CD14-positive monocyte (primary cell): ENCODE measurements at regions of chr2 and their contacts with region 1.

Region 1: GRCh38 chr2:69581774-69582581 is 61.6 kb downstream of the AAK1 start:
- DNase-seq: peak; percentile 42 to 58 (median 56)
- H3K4me3 ChIP-seq: peak overlapping the region; percentile 8 to 68 (median 25)
- H3K4me3 Mint-ChIP-seq: peak overlapping the region; percentile 75 to 93
- H3K27ac ChIP-seq: peak overlapping the region; percentile 71 to 86
- H3K27ac Mint-ChIP-seq: peak overlapping the region; percentile 88 to 97 (median 93)
- H3K4me1 ChIP-seq: peaks cover 75 to 78% of the 10 kb centered on the region in 2 donors
- H3K4me1 Mint-ChIP-seq: peaks cover 81% of the 10 kb centered on the region
- H3K27me3 ChIP-seq: no peaks in the 10 kb centered on the region
- H3K27me3 Mint-ChIP-seq: peaks cover 0 to 2% (median 0%) of the 10 kb centered on the region in 3 donors
- CTCF ChIP-seq: no peak

Region 2: DNA sequence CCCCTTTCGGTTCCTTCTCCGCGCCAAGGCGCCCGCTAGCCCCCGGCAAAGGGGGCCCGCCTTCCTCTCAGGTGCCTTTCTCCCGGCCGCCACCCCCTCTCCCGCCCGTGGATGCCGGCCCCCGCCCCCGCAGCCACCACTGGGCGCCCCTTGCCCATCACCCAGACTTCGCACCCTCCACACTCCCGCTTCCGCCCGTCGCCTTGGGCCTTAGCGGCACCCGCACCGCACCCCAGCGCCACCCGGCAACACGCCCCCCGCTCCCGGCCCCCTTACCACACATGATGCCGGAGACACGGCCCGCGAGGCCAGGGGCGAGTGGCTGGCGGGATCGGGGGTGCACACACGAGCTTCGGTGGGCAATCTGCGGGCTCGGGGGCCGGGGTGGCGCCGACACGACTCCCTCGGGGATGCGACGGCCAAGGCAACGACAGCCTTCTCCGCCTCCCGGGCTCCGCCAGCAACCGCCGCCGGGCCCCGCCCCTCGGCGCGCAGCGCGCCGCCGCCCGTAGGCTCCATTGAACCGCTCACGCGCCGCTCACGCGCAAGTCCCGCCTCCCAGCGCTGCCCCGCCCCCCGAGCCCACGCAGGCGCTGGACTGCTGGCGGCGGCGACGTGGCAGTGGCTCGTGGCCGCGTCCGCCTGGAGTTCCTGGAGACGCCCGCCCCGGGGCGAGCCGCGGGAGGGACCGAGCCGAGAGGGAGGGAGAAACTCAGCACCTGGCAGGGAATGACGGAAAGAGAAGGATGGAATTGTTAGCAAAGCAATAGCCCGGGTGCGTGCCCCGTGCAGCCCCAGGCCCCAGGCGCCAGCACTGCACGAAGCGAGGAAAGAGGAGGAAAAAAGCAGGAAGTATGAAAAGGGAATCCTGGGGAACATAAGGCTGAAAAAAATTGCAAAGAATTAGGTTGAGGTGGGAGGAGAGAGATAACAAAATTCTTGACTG is 194.9 kb before region 1 on chr2 and contains the start of gene GFPT1:
- intact Hi-C with region 1: no loop called
- DNase-seq: peak; percentile 88 to 89 (median 89)
- H3K4me3 ChIP-seq: peak within 1 kb of the TSS; percentile 73 to 90 (median 86)
- H3K4me3 Mint-ChIP-seq: peak within 1 kb of the TSS; percentile 87 to 95
- H3K27ac ChIP-seq: peak within 1 kb of the TSS; percentile 67 to 86
- H3K27ac Mint-ChIP-seq: peak within 1 kb of the TSS; percentile 88 to 96 (median 93)
- H3K4me1 ChIP-seq: peaks cover 31 to 36% of the 10 kb centered on the region in 2 donors
- H3K4me1 Mint-ChIP-seq: peaks cover 56% of the 10 kb centered on the region
- H3K27me3 ChIP-seq: no peaks in the 10 kb centered on the region
- H3K27me3 Mint-ChIP-seq: peaks cover 0 to 2% (median 0%) of the 10 kb centered on the region in 3 donors
- CTCF ChIP-seq: no peak
- polyA plus RNA-seq, gene GFPT1: 3.6 to 4.5 (median 3.7) TPM

Region 3: DNA sequence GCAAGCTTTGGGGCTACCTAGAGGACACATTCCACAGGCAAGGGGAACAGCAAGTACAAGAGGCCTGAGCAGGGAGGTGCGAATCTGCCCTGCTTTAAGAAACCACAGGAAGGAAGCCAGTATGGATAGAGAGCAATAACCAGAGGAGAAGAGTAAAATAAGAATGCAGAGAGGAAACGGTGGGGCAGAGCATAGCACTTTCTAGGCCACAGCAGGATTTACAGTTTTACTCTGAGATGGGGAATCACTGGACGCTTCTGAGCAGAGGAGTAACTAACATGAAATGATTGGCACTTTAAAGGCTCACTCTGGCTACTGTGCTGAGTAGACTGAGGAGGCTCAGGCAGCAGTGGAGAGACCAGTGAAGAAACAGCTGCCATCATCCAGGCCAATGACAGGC is 37.7 kb after region 1 on chr2:
- intact Hi-C with region 1: loop called in 1 of 2 experiments (anchors 5 kb)
- DNase-seq: no peak
- H3K4me3 ChIP-seq: no peak overlapping the region
- H3K4me3 Mint-ChIP-seq: no peak overlapping the region
- H3K27ac ChIP-seq: no peak overlapping the region
- H3K27ac Mint-ChIP-seq: no peak overlapping the region
- H3K4me1 ChIP-seq: peaks cover 55 to 70% of the 10 kb centered on the region in 2 donors
- H3K4me1 Mint-ChIP-seq: peaks cover 22% of the 10 kb centered on the region
- H3K27me3 ChIP-seq: no peaks in the 10 kb centered on the region
- H3K27me3 Mint-ChIP-seq: no peaks in the 10 kb centered on the region
- CTCF ChIP-seq: no peak